Calu3 (cell line): ENCODE measurements at regions of chr2 and their contacts with region 1.

Region 1: GRCh38 chr2:81894451-81894990 is 1590.0 kb upstream of the LRRTM1 start:
- DNase-seq: no peak
- H3K4me3 Mint-ChIP-seq: no peak overlapping the region
- H3K27ac Mint-ChIP-seq: no peak overlapping the region
- H3K4me1 Mint-ChIP-seq: peaks cover 12% of the 10 kb centered on the region
- H3K27me3 Mint-ChIP-seq: no peaks in the 10 kb centered on the region
- CTCF ChIP-seq: no peak

Region 2: GRCh38 chr2:81324046-81324445 is 570.5 kb before region 1 on chr2:
- CTCF ChIA-PET with region 1: no interaction called
- intact Hi-C with region 1: loop called (anchors 5 kb)
- DNase-seq: no peak
- H3K4me3 Mint-ChIP-seq: no peak overlapping the region
- H3K27ac Mint-ChIP-seq: no peak overlapping the region
- H3K4me1 Mint-ChIP-seq: no peaks in the 10 kb centered on the region
- H3K27me3 Mint-ChIP-seq: no peaks in the 10 kb centered on the region
- CTCF ChIP-seq: peak; percentile 42

Region 3: GRCh38 chr2:81363800-81364199 is 530.7 kb before region 1 on chr2:
- CTCF ChIA-PET with region 1: no interaction called
- intact Hi-C with region 1: no loop called
- DNase-seq: no peak
- H3K4me3 Mint-ChIP-seq: no peak overlapping the region
- H3K27ac Mint-ChIP-seq: no peak overlapping the region
- H3K4me1 Mint-ChIP-seq: no peaks in the 10 kb centered on the region
- H3K27me3 Mint-ChIP-seq: no peaks in the 10 kb centered on the region
- CTCF ChIP-seq: no peak

Region 4: GRCh38 chr2:81942136-81942680 is 47.7 kb after region 1 on chr2:
- CTCF ChIA-PET with region 1: no interaction called
- intact Hi-C with region 1: no loop called
- DNase-seq: no peak
- H3K4me3 Mint-ChIP-seq: no peak overlapping the region
- H3K27ac Mint-ChIP-seq: no peak overlapping the region
- H3K4me1 Mint-ChIP-seq: no peaks in the 10 kb centered on the region
- H3K27me3 Mint-ChIP-seq: no peaks in the 10 kb centered on the region
- CTCF ChIP-seq: no peak

Region 5: DNA sequence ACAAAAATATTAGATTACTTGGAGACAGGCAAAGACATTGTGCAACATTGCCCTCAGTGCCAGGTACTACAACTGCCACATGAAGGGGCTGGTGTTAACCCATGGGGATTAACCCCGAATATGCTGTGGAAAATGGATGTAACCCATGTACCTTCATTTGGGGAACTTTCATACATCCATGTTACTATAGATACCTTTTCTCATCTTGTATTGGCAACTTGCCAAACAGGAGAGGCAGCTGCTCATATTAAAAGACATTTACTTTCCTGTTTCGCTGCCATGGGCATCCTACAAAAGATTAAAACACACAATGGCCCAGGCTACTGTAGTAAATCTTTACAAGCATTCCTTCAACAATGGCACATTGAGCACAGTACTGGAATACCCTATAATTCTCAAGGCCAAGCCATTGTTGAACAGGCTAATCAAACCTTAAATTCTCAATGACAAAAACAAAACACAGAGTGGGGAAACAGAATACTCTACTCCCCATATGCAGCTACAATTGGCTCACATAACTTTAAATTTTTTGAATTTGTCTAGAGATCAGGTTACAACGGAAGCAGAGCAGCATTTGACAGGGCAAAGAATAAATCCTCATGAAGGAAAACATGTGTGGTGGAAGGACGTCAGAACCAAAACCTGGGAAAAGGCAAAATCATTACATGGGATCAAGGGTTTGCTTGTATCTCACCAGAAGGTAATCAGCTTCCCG is 133.5 kb after region 1 on chr2:
- CTCF ChIA-PET with region 1: no interaction called
- intact Hi-C with region 1: no loop called
- DNase-seq: no peak
- H3K4me3 Mint-ChIP-seq: no peak overlapping the region
- H3K27ac Mint-ChIP-seq: no peak overlapping the region
- H3K4me1 Mint-ChIP-seq: no peaks in the 10 kb centered on the region
- H3K27me3 Mint-ChIP-seq: no peaks in the 10 kb centered on the region
- CTCF ChIP-seq: no peak